Panc1 (cell line): ENCODE measurements at regions of chr10 and their contacts with region 1.

Region 1: GRCh38 chr10:11515596-11516430 is 95.6 kb downstream of the USP6NL start:
- DNase-seq: peak; percentile 43
- ATAC-seq: peak; percentile 79; the same call in 1 of the 2 replicates
- H3K4me3 ChIP-seq: no peak overlapping the region
- H3K27ac ChIP-seq: no peak overlapping the region
- H3K4me1 ChIP-seq: no peaks in the 10 kb centered on the region
- H3K27me3 ChIP-seq: no peaks in the 10 kb centered on the region
- CTCF ChIP-seq: peak; percentile 69

Region 2: GRCh38 chr10:11724938-11725776 is 209.3 kb after region 1 on chr10:
- CTCF ChIA-PET with region 1: no interaction called
- POLR2A ChIA-PET with region 1: no interaction called
- in situ Hi-C with region 1: no loop called
- intact Hi-C with region 1: loop called (anchors 1 kb)
- DNase-seq: peak; percentile 41
- ATAC-seq: peak; percentile 85
- H3K4me3 ChIP-seq: no peak overlapping the region
- H3K27ac ChIP-seq: no peak overlapping the region
- H3K4me1 ChIP-seq: no peaks in the 10 kb centered on the region
- H3K27me3 ChIP-seq: no peaks in the 10 kb centered on the region
- CTCF ChIP-seq: peak; percentile 76